RWPE1 (cell line): ENCODE measurements at regions of chr2 and their contacts with region 1.

Region 1: DNA sequence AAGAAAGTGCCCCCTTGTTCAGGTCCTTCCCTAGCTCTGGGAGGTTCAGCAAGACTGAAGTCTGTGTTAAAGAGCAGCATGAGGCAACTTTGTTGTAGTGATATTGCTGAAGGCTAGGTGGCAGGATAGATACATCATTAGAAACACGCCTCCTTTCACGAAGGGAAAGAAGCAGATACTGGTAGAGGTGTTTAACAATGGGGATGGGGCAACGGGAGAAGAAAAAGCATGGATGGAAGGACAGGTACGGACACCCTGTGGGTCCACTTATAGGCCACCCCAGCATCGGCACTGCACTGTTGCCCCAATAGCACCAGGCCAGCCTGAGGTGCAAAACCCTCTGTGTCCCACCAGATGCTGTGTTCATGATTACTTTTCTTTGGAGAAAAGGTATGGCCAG is 3.5 kb upstream of the IGFBP5 start:
- DNase-seq: peak; percentile 68
- H3K27ac ChIP-seq: no peak overlapping the region
- CTCF ChIP-seq: peak; percentile 67

Region 2: GRCh38 chr2:216849987-216850386 is 151.1 kb after region 1 on chr2:
- CTCF ChIA-PET with region 1: no interaction called
- POLR2A ChIA-PET with region 1: no interaction called
- DNase-seq: peak; percentile 51
- H3K27ac ChIP-seq: no peak overlapping the region
- CTCF ChIP-seq: no peak

Region 3: DNA sequence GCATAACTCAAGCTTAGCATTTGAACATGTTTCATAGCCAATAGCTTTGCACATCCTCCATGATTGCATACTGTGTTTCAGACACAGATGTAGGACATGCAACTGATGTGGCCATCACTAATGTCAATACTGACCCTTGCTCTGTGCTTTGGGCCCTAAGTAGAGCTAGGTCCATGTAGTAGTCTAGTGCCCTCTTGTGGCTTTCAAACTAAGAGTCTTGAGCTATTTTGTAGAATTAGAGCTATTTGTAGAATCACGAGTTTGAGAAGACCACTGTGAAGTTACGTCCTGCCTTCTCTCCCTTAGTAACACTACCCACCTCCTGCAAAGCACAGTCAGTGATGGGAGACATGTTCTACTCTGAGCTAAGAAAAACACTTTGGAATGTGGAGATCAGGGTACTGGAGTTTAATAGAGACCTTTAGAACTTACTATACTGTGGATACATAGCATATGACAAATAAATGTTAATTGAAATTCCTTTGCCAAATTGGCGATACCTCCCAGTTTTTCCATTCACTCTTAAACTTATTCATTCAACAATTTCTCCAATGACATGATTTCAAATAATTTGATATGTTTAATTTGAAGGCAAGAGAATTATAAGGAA is 467.5 kb after region 1 on chr2:
- CTCF ChIA-PET with region 1: interaction called, 11 read pairs
- POLR2A ChIA-PET with region 1: no interaction called
- DNase-seq: no peak
- H3K27ac ChIP-seq: no peak overlapping the region
- CTCF ChIP-seq: peak; percentile 29; the same call in 1 of the 2 replicates